H1 (cell line): ENCODE measurements at regions of chr14 and their contacts with region 1.

Region 1: DNA sequence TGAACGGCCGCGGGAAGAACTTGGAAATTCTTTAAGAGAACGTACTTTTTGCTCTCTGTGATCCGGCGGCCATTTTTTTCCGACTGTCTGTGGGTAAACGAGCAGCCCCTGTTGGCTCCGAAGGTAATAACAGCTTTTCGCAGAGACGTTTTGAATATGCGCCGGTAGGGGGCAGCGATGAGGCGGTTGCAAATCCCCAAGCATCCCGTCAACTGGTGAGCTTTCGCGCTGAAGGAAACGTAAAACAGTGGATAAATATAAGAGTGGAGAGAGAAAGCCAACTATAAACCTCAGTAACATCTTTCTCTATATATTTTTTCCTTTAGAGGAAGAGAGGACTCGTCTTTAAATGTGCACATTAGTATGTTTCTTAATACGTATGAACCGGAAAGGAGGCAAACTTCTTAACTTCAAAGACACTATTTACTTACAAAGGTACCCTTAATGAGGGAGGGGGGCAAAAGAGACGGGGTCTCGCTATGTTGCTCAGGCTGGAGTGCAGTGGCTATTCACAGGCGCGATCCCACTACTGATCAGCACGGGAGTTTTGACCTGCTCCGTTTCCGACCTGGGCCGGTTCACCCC is 9.6 kb upstream of the NEMF start:
- DNase-seq: peak; percentile 69 to 93
- H3K4me3 ChIP-seq: peak overlapping the region; percentile 70 to 95 (median 89)
- H3K27ac ChIP-seq: peak overlapping the region; percentile 96
- H3K4me1 ChIP-seq: peaks cover 0 to 4% (median 0%) of the 10 kb centered on the region in 4 experiments; a peak in 2 of 7 replicates
- H3K27me3 ChIP-seq: no peaks in the 10 kb centered on the region
- CTCF ChIP-seq: peak; percentile 99 to 100 (median 100)
- EP300 ChIP-seq: no peak
- POLR2A ChIP-seq: peak in 1 of 2 experiments; percentile 75; a peak in 1 of 3 replicates
- RAD21 ChIP-seq: peak in 1 of 2 experiments; percentile 43; a peak in 1 of 4 replicates

Region 2: GRCh38 chr14:49670475-49670874 is 191.7 kb before region 1 on chr14:
- CTCF ChIA-PET with region 1: no interaction called
- POLR2A ChIA-PET with region 1: no interaction called
- DNase-seq: no peak
- H3K4me3 ChIP-seq: no peak overlapping the region
- H3K27ac ChIP-seq: no peak overlapping the region
- H3K4me1 ChIP-seq: no peaks in the 10 kb centered on the region
- H3K27me3 ChIP-seq: no peaks in the 10 kb centered on the region
- CTCF ChIP-seq: no peak
- EP300 ChIP-seq: no peak
- POLR2A ChIP-seq: no peak
- RAD21 ChIP-seq: no peak

Region 3: DNA sequence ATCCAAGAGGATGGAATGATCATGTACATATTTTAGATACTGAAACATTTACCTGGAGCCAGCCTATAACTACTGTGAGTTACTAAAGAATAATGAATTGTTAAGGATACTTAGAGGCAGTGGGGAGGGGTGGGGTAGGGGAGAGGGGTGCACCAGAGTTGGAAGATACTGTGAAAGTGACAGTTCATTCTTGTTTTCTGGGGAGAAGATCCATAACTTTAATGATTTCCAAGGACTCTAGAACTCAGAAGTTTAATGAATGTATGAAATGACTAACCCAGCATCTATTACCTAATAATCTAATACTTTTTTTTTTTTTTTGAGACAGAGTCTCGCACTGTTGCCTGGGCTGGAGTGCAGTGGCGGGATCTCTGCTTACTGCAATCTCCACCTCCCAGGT is 83.8 kb before region 1 on chr14:
- CTCF ChIA-PET with region 1: no interaction called
- POLR2A ChIA-PET with region 1: no interaction called
- DNase-seq: no peak
- H3K4me3 ChIP-seq: no peak overlapping the region
- H3K27ac ChIP-seq: no peak overlapping the region
- H3K4me1 ChIP-seq: no peaks in the 10 kb centered on the region
- H3K27me3 ChIP-seq: no peaks in the 10 kb centered on the region
- CTCF ChIP-seq: no peak
- EP300 ChIP-seq: no peak
- POLR2A ChIP-seq: no peak
- RAD21 ChIP-seq: no peak

Region 4: DNA sequence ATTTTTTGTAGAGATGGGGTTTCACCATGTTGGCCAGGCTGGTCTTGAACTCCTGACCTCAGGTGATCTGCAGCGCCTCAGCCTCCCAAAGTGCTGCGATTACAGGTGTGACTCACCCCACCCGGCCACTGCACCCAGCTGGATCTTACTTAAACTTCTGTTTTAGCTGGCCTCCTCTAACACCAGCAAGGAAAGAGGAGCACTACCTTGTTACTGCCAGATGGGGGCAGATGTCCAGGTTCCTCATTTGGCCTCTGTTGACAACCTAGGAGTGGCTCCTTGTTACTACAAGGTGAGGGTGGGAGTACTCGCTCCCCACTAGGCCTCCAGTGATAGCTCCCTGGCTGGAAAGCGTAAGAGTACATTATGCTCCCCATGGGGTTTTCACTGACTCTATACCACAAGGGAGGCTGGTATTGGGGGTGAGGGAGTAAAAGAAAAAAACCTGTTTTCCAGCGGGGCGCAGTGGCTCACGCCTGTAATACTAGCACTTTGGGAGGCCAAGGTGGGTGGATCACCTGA is 17.6 kb after region 1 on chr14:
- CTCF ChIA-PET with region 1: interaction called, 41 read pairs
- POLR2A ChIA-PET with region 1: interaction called, 14 read pairs
- DNase-seq: peak; percentile 61 to 67
- H3K4me3 ChIP-seq: no peak overlapping the region
- H3K27ac ChIP-seq: no peak overlapping the region
- H3K4me1 ChIP-seq: peaks cover 2 to 8% (median 7%) of the 10 kb centered on the region in 4 experiments; a peak in 5 of 7 replicates
- H3K27me3 ChIP-seq: no peaks in the 10 kb centered on the region
- CTCF ChIP-seq: peak; percentile 63 to 93 (median 86)
- EP300 ChIP-seq: no peak
- POLR2A ChIP-seq: no peak
- RAD21 ChIP-seq: peak; percentile 63 to 80

Region 5: DNA sequence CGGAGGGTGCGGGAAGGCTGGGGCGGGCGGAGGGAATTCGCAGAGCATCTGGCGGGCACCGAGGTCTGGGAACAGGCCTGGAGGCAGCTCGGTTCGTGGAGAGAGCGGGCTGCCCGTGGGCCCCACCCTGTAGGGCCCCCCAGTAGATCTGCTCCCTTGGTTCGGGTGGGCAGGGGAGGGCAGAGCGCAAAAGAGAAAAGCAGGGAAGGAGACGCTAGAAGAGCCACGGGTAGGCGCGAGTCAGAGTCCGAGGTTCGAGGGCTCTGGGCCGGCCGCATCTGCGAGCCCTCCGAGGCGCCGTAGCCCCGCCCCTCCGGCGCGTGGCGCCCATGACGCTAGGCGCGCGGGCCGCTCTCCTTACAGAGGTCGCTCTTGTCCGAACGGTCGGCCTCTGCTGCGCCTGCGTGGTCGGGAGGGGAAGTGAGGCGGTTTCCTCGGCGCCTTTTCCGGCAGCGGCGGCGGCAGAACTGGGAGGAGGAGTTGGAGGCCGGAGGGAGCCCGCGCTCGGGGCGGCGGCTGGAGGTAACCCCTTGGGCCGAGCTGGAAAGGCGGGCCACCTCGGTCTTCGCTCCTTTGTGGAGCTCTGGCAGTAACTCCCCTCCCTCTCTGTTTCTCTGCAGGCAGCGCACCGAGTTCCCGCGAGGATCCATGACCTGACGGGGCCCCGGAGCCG is 30.6 kb after region 1 on chr14 and contains the start of gene ARF6:
- CTCF ChIA-PET with region 1: interaction called, 7 read pairs
- POLR2A ChIA-PET with region 1: interaction called, 22 read pairs
- DNase-seq: peak; percentile 83 to 96
- H3K4me3 ChIP-seq: peak within 1 kb of the TSS; percentile 82 to 93 (median 84)
- H3K27ac ChIP-seq: peak within 1 kb of the TSS; percentile 88
- H3K4me1 ChIP-seq: no peaks in the 10 kb centered on the region; a peak in 2 of 7 replicates
- H3K27me3 ChIP-seq: no peaks in the 10 kb centered on the region
- CTCF ChIP-seq: no peak; a peak in 1 of 4 replicates
- EP300 ChIP-seq: peak in 1 of 2 experiments; percentile 48; a peak in 1 of 3 replicates
- POLR2A ChIP-seq: peak; percentile 68 to 99
- RAD21 ChIP-seq: peak; percentile 0 to 30; a peak in 1 of 4 replicates
- total RNA-seq, gene ARF6: 56.7 and 56.9 TPM in 2 replicates

Region 6: DNA sequence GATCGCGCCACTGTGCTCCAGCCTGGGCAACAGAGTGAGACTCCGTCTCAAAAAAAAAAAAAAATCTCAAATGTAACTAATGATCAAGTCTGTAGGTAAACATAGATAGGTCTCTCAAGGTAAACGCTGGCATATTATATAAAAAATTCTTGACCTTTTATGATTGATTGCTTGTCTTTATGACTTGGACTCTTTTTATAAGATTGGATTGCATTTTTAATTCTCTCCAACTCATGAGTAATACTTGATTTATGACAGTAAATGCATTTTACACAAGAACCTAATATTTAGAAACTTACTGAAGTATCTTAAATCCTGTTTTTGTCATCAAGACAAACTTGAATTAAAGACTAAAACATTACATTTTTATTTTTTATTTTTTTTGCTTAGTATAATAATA is 46.8 kb after region 1 on chr14:
- CTCF ChIA-PET with region 1: no interaction called
- POLR2A ChIA-PET with region 1: no interaction called
- DNase-seq: no peak
- H3K4me3 ChIP-seq: no peak overlapping the region
- H3K27ac ChIP-seq: no peak overlapping the region
- H3K4me1 ChIP-seq: no peaks in the 10 kb centered on the region
- H3K27me3 ChIP-seq: no peaks in the 10 kb centered on the region
- CTCF ChIP-seq: no peak
- EP300 ChIP-seq: no peak
- POLR2A ChIP-seq: no peak
- RAD21 ChIP-seq: no peak

Region 7: GRCh38 chr14:49924852-49925251 is 62.7 kb after region 1 on chr14:
- CTCF ChIA-PET with region 1: interaction called, 12 read pairs
- POLR2A ChIA-PET with region 1: no interaction called
- DNase-seq: peak in 1 of 2 experiments; percentile 11
- H3K4me3 ChIP-seq: no peak overlapping the region
- H3K27ac ChIP-seq: no peak overlapping the region
- H3K4me1 ChIP-seq: no peaks in the 10 kb centered on the region
- H3K27me3 ChIP-seq: no peaks in the 10 kb centered on the region
- CTCF ChIP-seq: no peak
- EP300 ChIP-seq: no peak
- POLR2A ChIP-seq: no peak
- RAD21 ChIP-seq: no peak

Region 8: GRCh38 chr14:50106178-50106577 is 244.0 kb after region 1 on chr14:
- CTCF ChIA-PET with region 1: interaction called, 90 read pairs
- POLR2A ChIA-PET with region 1: interaction called, 7 read pairs
- DNase-seq: no peak
- H3K4me3 ChIP-seq: no peak overlapping the region
- H3K27ac ChIP-seq: no peak overlapping the region
- H3K4me1 ChIP-seq: no peaks in the 10 kb centered on the region; a peak in 1 of 7 replicates
- H3K27me3 ChIP-seq: no peaks in the 10 kb centered on the region
- CTCF ChIP-seq: no peak
- EP300 ChIP-seq: no peak
- POLR2A ChIP-seq: 0 out of 3 replicates have a peak, but pooled peaks of 1 of the 2 experiments have one; percentile 15
- RAD21 ChIP-seq: no peak

Region 9: GRCh38 chr14:50116181-50116956 is 254.2 kb after region 1 on chr14 and contains the start of gene VCPKMT:
- CTCF ChIA-PET with region 1: interaction called, 11 read pairs
- POLR2A ChIA-PET with region 1: interaction called, 21 read pairs
- DNase-seq: peak; percentile 66 to 95
- H3K4me3 ChIP-seq: peak within 1 kb of the TSS; percentile 93 to 97 (median 96)
- H3K27ac ChIP-seq: peak within 1 kb of the TSS; percentile 88
- H3K4me1 ChIP-seq: peaks cover 0 to 6% (median 3%) of the 10 kb centered on the region in 4 experiments; a peak in 3 of 7 replicates
- H3K27me3 ChIP-seq: no peaks in the 10 kb centered on the region
- CTCF ChIP-seq: no peak
- EP300 ChIP-seq: no peak
- POLR2A ChIP-seq: peak; percentile 97 to 98
- RAD21 ChIP-seq: no peak
- total RNA-seq, gene VCPKMT: 7.1 and 8.9 TPM in 2 replicates